ENCODE measurements at regions of chr6 and their contacts with region 1.

Region 1: GRCh38 chr6:36360241-36361054 is 23.8 kb upstream of the BNIP5 start:
- DNase-seq: peak; percentile 66
- ATAC-seq: peak; percentile 99
- H3K4me3 ChIP-seq: no peak overlapping the region
- H3K27ac ChIP-seq: no peak overlapping the region
- H3K4me1 ChIP-seq: peaks cover 7% of the 10 kb centered on the region
- H3K27me3 ChIP-seq: peaks cover 8% of the 10 kb centered on the region
- CTCF ChIP-seq: peak; percentile 87
- POLR2A ChIP-seq: no peak
- RAD21 ChIP-seq: peak; percentile 93

Region 2: GRCh38 chr6:36027501-36028087 is 332.9 kb before region 1 on chr6 and contains the start of gene MAPK14:
- CTCF ChIA-PET with region 1: no interaction called
- POLR2A ChIA-PET with region 1: no interaction called
- dilution Hi-C with region 1: no loop called
- in situ Hi-C with region 1: no loop called
- intact Hi-C with region 1: loop called (anchors 1 kb)
- DNase-seq: peak; percentile 100
- ATAC-seq: peak; percentile 85
- H3K4me3 ChIP-seq: peak within 1 kb of the TSS; percentile 65
- H3K27ac ChIP-seq: peak within 1 kb of the TSS; percentile 94
- H3K4me1 ChIP-seq: peaks cover 6% of the 10 kb centered on the region; the same call in 1 of the 2 replicates
- H3K27me3 ChIP-seq: no peaks in the 10 kb centered on the region
- CTCF ChIP-seq: peak; percentile 95
- POLR2A ChIP-seq: peak; percentile 88
- RAD21 ChIP-seq: peak; percentile 88
- total RNA-seq, gene MAPK14: 69.7 and 74.4 TPM in 2 replicates

Region 3: GRCh38 chr6:36123257-36124139 is 236.9 kb before region 1 on chr6:
- CTCF ChIA-PET with region 1: interaction called, 3 read pairs
- POLR2A ChIA-PET with region 1: no interaction called
- dilution Hi-C with region 1: no loop called
- in situ Hi-C with region 1: loop called (anchors 5 kb)
- intact Hi-C with region 1: loop called (anchors 2 kb)
- DNase-seq: peak; percentile 69
- ATAC-seq: peak; percentile 83
- H3K4me3 ChIP-seq: no peak overlapping the region
- H3K27ac ChIP-seq: no peak overlapping the region
- H3K4me1 ChIP-seq: peaks cover 22% of the 10 kb centered on the region
- H3K27me3 ChIP-seq: no peaks in the 10 kb centered on the region
- CTCF ChIP-seq: peak; percentile 81
- POLR2A ChIP-seq: no peak
- RAD21 ChIP-seq: peak; percentile 78

Region 4: DNA sequence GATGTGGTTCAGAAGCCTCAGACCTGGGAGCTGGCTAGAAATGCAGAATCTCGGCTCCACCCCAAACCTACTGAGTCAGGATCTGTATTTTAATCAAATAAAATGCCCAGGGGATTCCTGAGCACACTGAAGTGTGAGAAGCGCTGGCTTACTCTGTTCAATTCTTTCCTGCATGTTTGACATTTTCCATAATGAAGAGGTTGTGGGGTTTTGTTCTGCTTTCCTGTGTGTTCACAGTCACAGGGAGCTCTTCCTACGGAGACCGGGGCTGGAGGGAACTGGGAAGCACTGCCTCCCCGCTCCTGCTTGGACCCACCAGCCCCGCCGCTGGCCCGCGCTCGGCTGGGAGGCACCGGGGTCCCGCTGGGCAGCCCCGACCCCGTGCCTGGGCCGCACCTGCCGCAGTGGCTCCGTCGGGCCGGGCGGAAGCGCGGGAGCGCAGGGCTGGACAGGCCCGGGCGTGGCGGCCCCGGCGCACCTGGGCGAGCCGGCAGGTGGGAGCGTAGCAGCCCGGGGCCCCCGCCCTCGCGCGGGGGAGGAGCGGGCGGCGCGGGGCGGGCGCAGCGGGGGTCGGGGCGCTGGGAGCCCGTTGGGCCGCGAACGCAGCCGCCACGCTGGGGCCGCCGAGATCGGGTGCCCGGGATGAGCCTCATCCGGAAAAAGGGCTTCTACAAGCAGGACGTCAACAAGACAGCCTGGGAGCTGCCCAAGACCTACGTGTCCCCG is 230.3 kb before region 1 on chr6 and contains the start of gene MAPK13:
- CTCF ChIA-PET with region 1: interaction called, 3 read pairs
- POLR2A ChIA-PET with region 1: no interaction called
- dilution Hi-C with region 1: no loop called
- in situ Hi-C with region 1: loop called (anchors 5 kb)
- intact Hi-C with region 1: no loop called
- DNase-seq: peak; percentile 40
- ATAC-seq: peak; percentile 3; the same call in 1 of the 2 replicates
- H3K4me3 ChIP-seq: peak within 1 kb of the TSS; percentile 6; the same call in 1 of the 2 replicates
- H3K27ac ChIP-seq: peak within 1 kb of the TSS; percentile 53
- H3K4me1 ChIP-seq: peaks cover 35% of the 10 kb centered on the region
- H3K27me3 ChIP-seq: no peaks in the 10 kb centered on the region
- CTCF ChIP-seq: no peak
- POLR2A ChIP-seq: no peak
- RAD21 ChIP-seq: no peak
- total RNA-seq, gene MAPK13: 1.9 and 2.0 TPM in 2 replicates

Region 5: GRCh38 chr6:36196880-36197548 is 163.4 kb before region 1 on chr6:
- CTCF ChIA-PET with region 1: no interaction called
- POLR2A ChIA-PET with region 1: no interaction called
- dilution Hi-C with region 1: no loop called
- in situ Hi-C with region 1: no loop called
- intact Hi-C with region 1: loop called (anchors 2 kb)
- DNase-seq: peak; percentile 96
- ATAC-seq: peak; percentile 95
- H3K4me3 ChIP-seq: peak overlapping the region; percentile 65
- H3K27ac ChIP-seq: peak overlapping the region; percentile 97
- H3K4me1 ChIP-seq: peaks cover 6% of the 10 kb centered on the region; the same call in 1 of the 2 replicates
- H3K27me3 ChIP-seq: no peaks in the 10 kb centered on the region
- CTCF ChIP-seq: no peak
- POLR2A ChIP-seq: peak; percentile 57; the same call in 1 of the 2 replicates
- RAD21 ChIP-seq: no peak

Region 6: GRCh38 chr6:36302227-36302976 is 58.0 kb before region 1 on chr6:
- CTCF ChIA-PET with region 1: interaction called, 6 read pairs
- POLR2A ChIA-PET with region 1: no interaction called
- dilution Hi-C with region 1: no loop called
- in situ Hi-C with region 1: no loop called
- intact Hi-C with region 1: loop called (anchors 1 kb)
- DNase-seq: peak; percentile 86
- ATAC-seq: peak; percentile 85
- H3K4me3 ChIP-seq: no peak overlapping the region
- H3K27ac ChIP-seq: no peak overlapping the region
- H3K4me1 ChIP-seq: peaks cover 4% of the 10 kb centered on the region
- H3K27me3 ChIP-seq: peaks cover 15% of the 10 kb centered on the region
- CTCF ChIP-seq: peak; percentile 98
- POLR2A ChIP-seq: no peak
- RAD21 ChIP-seq: peak; percentile 74

Region 7: GRCh38 chr6:36340618-36341454 is 19.6 kb before region 1 on chr6:
- CTCF ChIA-PET with region 1: interaction called, 8 read pairs
- POLR2A ChIA-PET with region 1: no interaction called
- dilution Hi-C with region 1: no loop called
- in situ Hi-C with region 1: no loop called
- intact Hi-C with region 1: loop called (anchors 1 kb)
- DNase-seq: peak; percentile 59
- ATAC-seq: peak; percentile 100
- H3K4me3 ChIP-seq: no peak overlapping the region
- H3K27ac ChIP-seq: no peak overlapping the region
- H3K4me1 ChIP-seq: no peaks in the 10 kb centered on the region
- H3K27me3 ChIP-seq: peaks cover 50% of the 10 kb centered on the region
- CTCF ChIP-seq: peak; percentile 94
- POLR2A ChIP-seq: no peak
- RAD21 ChIP-seq: peak; percentile 75

Measured in IMR-90 (cell line).